Activated naive CD4-positive, alpha-beta T cell treated with anti-CD3 and anti-CD28 coated beads for 36 hours (primary cell): ENCODE measurements at regions of chr1 and their contacts with region 1.

Region 1: DNA sequence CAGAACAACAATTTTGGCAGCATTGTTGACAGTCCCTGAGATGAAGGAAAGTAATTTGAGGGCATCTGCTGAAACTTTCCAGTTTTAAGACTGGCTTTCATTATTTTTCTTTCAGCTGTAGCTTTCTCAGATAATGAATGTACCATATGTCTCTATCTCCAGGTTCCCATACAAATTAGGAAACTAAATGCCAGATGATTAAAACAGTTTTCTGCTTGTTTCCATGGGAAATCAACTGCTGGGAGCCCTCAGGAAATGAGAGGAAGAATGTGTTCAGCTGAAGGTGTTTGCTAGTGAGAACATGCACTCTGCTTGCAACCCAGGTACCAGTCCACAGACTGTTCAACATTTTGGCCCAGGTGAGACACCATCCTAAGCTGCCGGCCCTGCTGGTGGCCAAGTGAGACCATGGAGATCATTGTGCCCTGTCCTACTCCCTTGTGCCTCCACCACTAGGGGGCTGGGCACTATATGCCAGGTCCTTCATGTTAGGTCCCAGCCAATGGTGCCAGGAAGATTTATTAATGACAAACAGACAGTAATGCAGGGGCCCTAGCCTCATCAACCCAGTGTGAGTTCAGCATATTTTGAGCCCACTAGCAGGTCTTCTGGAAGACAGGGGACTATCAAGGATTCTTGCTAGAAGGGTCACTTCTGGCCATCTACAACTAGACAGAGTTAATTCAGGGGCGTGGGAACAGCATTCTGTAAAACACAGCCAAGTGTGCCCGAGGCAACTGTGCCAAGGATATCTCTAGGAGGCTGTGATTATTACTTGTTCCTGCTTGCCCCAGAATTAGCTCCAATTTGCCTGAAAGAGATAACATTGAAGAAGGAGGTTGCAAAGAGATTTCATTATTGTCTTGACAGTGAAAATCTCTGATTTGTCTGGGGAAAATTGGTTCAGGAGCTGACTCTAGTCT is 17.0 kb upstream of the LRRC8C start:
- DNase-seq: no peak
- H3K4me3 Mint-ChIP-seq: no peak overlapping the region
- H3K27ac Mint-ChIP-seq: no peak overlapping the region
- H3K4me1 Mint-ChIP-seq: peaks cover 65% of the 10 kb centered on the region
- H3K27me3 Mint-ChIP-seq: no peaks in the 10 kb centered on the region

Region 2: GRCh38 chr1:89589515-89589914 is 26.4 kb before region 1 on chr1:
- CTCF ChIA-PET with region 1: interaction called, 3 read pairs
- intact Hi-C with region 1: loop called (anchors 2 kb)
- DNase-seq: no peak
- H3K4me3 Mint-ChIP-seq: no peak overlapping the region
- H3K27ac Mint-ChIP-seq: peak overlapping the region; percentile 47
- H3K4me1 Mint-ChIP-seq: peaks cover 86% of the 10 kb centered on the region
- H3K27me3 Mint-ChIP-seq: no peaks in the 10 kb centered on the region

Region 3: DNA sequence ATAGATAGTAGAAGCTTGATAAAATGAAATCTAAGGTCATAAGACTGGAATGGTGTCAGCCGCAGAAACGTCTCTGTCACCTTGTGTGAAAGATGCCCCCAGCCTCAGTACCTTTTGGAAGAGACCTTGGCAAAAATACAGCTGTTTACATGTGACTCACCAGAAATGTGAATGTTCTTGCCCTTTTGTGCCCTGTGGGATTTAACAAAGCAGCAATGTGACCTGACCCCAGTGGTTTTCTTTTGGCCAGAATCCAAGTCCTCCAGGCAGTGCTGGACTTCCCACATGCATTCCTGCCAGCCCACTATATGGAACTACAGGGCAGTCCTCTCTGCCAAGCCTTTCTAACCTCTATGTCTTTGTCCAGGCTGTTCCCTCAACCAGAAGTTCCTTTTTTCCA is 10.2 kb before region 1 on chr1:
- CTCF ChIA-PET with region 1: interaction called, 24 read pairs
- intact Hi-C with region 1: loop called (anchors 1 kb)
- DNase-seq: no peak
- H3K4me3 Mint-ChIP-seq: no peak overlapping the region
- H3K27ac Mint-ChIP-seq: no peak overlapping the region
- H3K4me1 Mint-ChIP-seq: peaks cover 95% of the 10 kb centered on the region
- H3K27me3 Mint-ChIP-seq: no peaks in the 10 kb centered on the region

Region 4: GRCh38 chr1:89641781-89642180 is 25.8 kb after region 1 on chr1:
- CTCF ChIA-PET with region 1: no interaction called
- intact Hi-C with region 1: no loop called
- DNase-seq: no peak
- H3K4me3 Mint-ChIP-seq: no peak overlapping the region
- H3K27ac Mint-ChIP-seq: peak overlapping the region; percentile 76
- H3K4me1 Mint-ChIP-seq: peaks cover 69% of the 10 kb centered on the region
- H3K27me3 Mint-ChIP-seq: no peaks in the 10 kb centered on the region

Region 5: GRCh38 chr1:89794406-89794805 is 178.5 kb after region 1 on chr1:
- CTCF ChIA-PET with region 1: no interaction called
- intact Hi-C with region 1: no loop called
- DNase-seq: no peak
- H3K4me3 Mint-ChIP-seq: no peak overlapping the region
- H3K27ac Mint-ChIP-seq: no peak overlapping the region
- H3K4me1 Mint-ChIP-seq: no peaks in the 10 kb centered on the region
- H3K27me3 Mint-ChIP-seq: no peaks in the 10 kb centered on the region

Region 6: DNA sequence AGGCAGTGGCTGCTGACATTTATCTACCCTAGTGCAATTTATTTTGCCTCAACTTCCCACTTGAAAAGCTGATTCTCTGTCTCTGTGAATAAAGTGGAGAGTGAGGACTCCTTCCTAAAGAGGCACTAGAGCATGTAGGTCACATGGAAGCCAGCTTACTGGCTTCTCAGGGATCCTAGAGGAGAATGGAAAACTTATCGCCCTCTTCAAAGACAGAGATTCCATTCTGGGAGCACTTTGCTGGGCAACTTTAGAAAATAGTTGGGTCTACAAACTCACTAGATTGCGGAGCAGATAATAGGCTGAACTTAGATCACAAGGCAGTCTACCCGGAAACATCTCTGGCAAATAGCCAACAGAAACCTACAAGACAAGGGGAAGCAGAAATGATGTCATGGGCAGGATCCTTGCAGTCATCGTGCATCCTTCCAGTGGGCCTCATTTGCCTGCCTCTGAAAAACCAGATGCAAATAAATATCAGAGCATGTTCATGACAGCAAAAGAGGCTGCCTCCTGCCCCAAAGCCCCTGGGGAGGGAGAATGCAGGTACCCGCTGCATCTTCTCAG is 1205.9 kb after region 1 on chr1:
- CTCF ChIA-PET with region 1: no interaction called
- intact Hi-C with region 1: no loop called
- DNase-seq: no peak
- H3K4me3 Mint-ChIP-seq: no peak overlapping the region
- H3K27ac Mint-ChIP-seq: no peak overlapping the region
- H3K4me1 Mint-ChIP-seq: no peaks in the 10 kb centered on the region
- H3K27me3 Mint-ChIP-seq: peaks cover 21% of the 10 kb centered on the region